ENCODE measurements at regions of chr1 and their contacts with region 1.

Region 1: DNA sequence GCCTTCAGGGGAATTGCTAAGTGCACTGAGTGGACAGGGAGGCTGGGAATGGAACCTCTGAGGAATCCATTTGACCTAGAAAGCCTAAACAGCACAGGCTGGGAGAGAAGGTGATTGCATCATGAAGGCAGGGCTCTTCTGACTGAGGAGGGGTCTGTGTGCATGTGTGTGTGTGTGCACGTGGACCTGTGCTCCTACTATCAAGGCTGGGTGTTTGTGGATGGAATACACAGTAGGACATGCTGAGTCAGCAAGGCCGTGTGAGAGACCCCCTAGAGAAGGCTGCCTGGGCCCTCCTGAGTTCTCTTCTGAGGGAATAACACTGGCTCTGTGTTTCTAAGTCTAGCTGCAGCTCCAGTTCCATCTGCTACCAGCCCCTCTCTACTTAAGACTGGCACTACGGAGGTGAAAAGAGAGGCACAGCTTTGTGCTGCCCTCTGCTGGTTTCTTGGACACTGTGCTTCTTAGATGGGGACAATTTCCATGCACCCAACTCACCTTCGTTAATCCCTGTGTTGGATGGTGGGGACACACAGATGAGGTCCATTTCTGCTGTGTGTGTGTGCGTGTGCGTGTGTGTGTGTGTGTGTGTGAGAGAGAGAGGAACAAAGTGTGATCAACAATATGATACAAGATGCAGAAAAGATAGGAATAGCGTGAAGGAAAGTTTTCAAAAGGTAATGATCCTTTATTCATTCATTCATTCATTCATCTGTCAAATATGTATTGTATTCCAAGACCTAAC is 6.2 kb upstream of the EFCAB14 start:
- DNase-seq: peak; percentile 47 to 89
- ATAC-seq: peak; percentile 92 to 99 (median 99)
- H3K4me3 ChIP-seq: no peak overlapping the region
- H3K4me3 Mint-ChIP-seq: no peak overlapping the region
- H3K27ac ChIP-seq: no peak overlapping the region
- H3K27ac Mint-ChIP-seq: no peak overlapping the region
- H3K4me1 ChIP-seq: no peaks in the 10 kb centered on the region
- H3K4me1 Mint-ChIP-seq: no peaks in the 10 kb centered on the region
- H3K27me3 ChIP-seq: no peaks in the 10 kb centered on the region
- H3K27me3 Mint-ChIP-seq: peaks cover 22 to 40% of the 10 kb centered on the region in 2 donors
- CTCF ChIP-seq: peak; percentile 69

Region 2: DNA sequence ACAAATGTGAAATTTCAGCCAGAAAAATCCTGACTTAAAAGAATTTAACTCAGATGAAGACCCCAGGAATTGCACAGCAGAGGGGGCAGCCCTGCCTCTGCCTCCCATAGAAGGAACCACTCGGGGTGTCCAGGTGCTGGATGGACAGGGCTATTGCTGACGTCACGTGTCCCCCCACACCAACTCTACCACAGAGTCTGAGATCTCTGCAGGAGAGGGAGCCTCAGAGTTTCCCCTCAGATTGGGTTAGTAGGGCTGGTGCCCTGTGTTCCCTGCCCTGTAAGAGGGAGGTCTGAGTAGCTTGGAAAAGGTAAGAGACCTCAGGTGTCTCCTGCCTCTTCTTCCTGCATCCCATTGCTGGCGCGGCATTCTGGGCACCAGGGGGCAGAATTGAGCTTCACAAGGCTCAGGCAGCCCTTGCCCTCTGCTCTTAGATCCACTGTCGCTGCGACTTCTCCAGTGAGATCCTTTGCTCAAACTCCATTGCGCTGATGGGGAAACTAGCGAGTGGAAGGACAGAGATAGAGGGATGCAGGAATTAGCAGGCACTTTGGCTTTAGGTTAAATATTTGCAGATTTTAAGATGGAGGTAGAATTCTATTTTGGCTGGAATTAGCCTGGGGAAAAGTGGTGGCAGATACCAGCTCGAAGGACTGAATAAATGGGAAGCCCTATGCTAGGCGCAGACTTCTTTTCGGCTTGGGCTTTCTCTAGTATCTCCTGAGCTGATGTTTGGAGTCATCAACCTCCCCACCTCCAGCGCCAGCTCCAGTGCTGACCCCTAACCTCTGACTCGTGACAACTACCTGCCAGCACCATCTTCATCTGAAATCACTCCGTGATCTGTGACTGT is 278.3 kb before region 1 on chr1:
- intact Hi-C with region 1: loop called (anchors 1 kb)
- DNase-seq: peak; percentile 57 to 83
- ATAC-seq: peak in 1 of 3 donors; percentile 62
- H3K4me3 ChIP-seq: no peak overlapping the region
- H3K4me3 Mint-ChIP-seq: no peak overlapping the region
- H3K27ac ChIP-seq: no peak overlapping the region
- H3K27ac Mint-ChIP-seq: no peak overlapping the region
- H3K4me1 ChIP-seq: peaks cover 15% of the 10 kb centered on the region
- H3K4me1 Mint-ChIP-seq: peaks cover 14 to 36% of the 10 kb centered on the region in 2 donors
- H3K27me3 ChIP-seq: peaks cover 13% of the 10 kb centered on the region
- H3K27me3 Mint-ChIP-seq: peaks cover 55 to 79% of the 10 kb centered on the region in 2 donors
- CTCF ChIP-seq: peak; percentile 78

Region 3: GRCh38 chr1:46477153-46477929 is 247.8 kb before region 1 on chr1:
- intact Hi-C with region 1: loop called (anchors 1 kb)
- DNase-seq: peak; percentile 67 to 82
- ATAC-seq: peak; percentile 79 to 99 (median 97)
- H3K4me3 ChIP-seq: no peak overlapping the region
- H3K4me3 Mint-ChIP-seq: no peak overlapping the region
- H3K27ac ChIP-seq: no peak overlapping the region
- H3K27ac Mint-ChIP-seq: peak overlapping the region in 1 of 2 donors; percentile 10
- H3K4me1 ChIP-seq: no peaks in the 10 kb centered on the region
- H3K4me1 Mint-ChIP-seq: no peaks in the 10 kb centered on the region
- H3K27me3 ChIP-seq: no peaks in the 10 kb centered on the region
- H3K27me3 Mint-ChIP-seq: peaks cover 18 to 22% of the 10 kb centered on the region in 2 donors
- CTCF ChIP-seq: peak; percentile 79

Region 4: GRCh38 chr1:46812065-46812963 is 87.2 kb after region 1 on chr1:
- intact Hi-C with region 1: no loop called
- DNase-seq: no peak
- ATAC-seq: no peak
- H3K4me3 ChIP-seq: no peak overlapping the region
- H3K4me3 Mint-ChIP-seq: no peak overlapping the region
- H3K27ac ChIP-seq: no peak overlapping the region
- H3K27ac Mint-ChIP-seq: no peak overlapping the region
- H3K4me1 ChIP-seq: no peaks in the 10 kb centered on the region
- H3K4me1 Mint-ChIP-seq: no peaks in the 10 kb centered on the region
- H3K27me3 ChIP-seq: no peaks in the 10 kb centered on the region
- H3K27me3 Mint-ChIP-seq: peaks cover 2 to 3% of the 10 kb centered on the region in 2 donors
- CTCF ChIP-seq: no peak

Measured in natural killer cell (primary cell).